A673 (cell line): ENCODE measurements at regions of chr17 and their contacts with region 1.

Region 1: GRCh38 chr17:40287494-40288369 is at the start of gene CDC6:
- DNase-seq: peak; percentile 98
- H3K4me3 ChIP-seq: peak within 1 kb of the TSS; percentile 85
- H3K27ac ChIP-seq: peak within 1 kb of the TSS; percentile 92
- H3K4me1 ChIP-seq: peaks cover 6% of the 10 kb centered on the region
- H3K27me3 ChIP-seq: no peaks in the 10 kb centered on the region
- CTCF ChIP-seq: no peak
- total RNA-seq, gene CDC6: 82.6 and 85.7 TPM in 2 replicates

Region 2: DNA sequence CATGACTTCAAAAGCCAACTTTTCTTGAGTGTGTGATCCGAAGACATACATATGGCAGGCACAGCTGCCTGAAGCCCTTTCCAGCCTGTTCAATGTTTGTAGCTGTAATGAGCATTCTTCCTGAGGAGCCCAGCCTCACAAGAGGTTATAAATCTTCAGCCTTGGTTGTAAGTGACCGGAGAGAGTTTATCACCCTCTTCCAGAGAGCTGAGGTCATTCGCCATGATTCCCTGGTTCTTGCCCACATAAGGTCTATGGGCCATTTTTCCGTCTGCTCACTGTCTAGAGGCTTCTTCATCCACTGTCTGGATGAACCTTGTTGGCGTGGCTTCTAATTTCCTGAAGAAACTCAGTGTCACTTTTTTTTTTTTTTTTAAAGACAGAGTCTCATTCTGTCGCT is 282.2 kb before region 1 on chr17:
- CTCF ChIA-PET with region 1: no interaction called
- POLR2A ChIA-PET with region 1: interaction called, 11 read pairs
- intact Hi-C with region 1: loop called (anchors 10 kb)
- DNase-seq: no peak
- H3K4me3 ChIP-seq: no peak overlapping the region
- H3K27ac ChIP-seq: no peak overlapping the region
- H3K4me1 ChIP-seq: no peaks in the 10 kb centered on the region
- H3K27me3 ChIP-seq: no peaks in the 10 kb centered on the region
- CTCF ChIP-seq: no peak

Region 3: DNA sequence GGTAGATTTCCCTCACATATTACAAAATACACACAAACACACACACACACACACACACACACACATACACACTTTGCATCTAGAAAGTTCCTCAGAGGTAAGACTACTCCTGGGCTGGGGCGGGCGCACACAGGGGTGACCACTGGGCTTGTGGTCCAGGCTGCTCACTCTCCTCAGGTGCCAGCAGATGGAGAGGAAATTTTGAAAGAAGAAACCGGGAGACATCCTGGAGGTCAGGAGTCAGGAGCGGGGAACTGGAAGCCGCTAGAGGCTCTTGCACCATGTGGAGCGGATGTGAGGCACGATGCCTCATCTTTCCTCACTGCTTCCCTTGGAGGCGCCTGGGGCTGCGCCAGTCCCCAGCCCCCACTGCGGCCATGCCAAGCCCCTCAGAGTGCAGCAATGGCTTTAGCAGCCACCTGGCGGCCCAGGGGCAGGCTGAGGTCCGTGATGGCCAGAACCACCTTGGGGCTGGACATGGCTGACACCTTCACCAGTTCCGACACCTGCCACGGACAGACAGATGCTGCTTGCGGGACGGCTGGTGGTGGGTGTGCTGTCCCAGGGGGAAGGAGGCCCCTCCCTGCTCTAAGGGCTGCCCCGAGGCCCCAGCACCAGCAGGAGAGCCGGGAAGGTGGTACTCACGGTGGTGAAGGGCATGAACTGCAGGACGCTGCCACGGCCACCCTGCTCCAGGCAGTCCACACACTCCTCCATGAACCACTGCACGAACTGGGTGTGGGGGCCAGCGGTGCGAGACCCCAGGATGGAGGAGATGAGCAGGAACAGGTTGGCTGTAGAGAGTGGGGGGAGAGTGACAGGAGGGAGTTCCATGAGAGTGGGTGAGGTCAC is 268.4 kb before region 1 on chr17:
- CTCF ChIA-PET with region 1: no interaction called
- POLR2A ChIA-PET with region 1: no interaction called
- intact Hi-C with region 1: loop called (anchors 10 kb)
- DNase-seq: no peak
- H3K4me3 ChIP-seq: no peak overlapping the region
- H3K27ac ChIP-seq: no peak overlapping the region
- H3K4me1 ChIP-seq: no peaks in the 10 kb centered on the region
- H3K27me3 ChIP-seq: no peaks in the 10 kb centered on the region
- CTCF ChIP-seq: no peak

Region 4: DNA sequence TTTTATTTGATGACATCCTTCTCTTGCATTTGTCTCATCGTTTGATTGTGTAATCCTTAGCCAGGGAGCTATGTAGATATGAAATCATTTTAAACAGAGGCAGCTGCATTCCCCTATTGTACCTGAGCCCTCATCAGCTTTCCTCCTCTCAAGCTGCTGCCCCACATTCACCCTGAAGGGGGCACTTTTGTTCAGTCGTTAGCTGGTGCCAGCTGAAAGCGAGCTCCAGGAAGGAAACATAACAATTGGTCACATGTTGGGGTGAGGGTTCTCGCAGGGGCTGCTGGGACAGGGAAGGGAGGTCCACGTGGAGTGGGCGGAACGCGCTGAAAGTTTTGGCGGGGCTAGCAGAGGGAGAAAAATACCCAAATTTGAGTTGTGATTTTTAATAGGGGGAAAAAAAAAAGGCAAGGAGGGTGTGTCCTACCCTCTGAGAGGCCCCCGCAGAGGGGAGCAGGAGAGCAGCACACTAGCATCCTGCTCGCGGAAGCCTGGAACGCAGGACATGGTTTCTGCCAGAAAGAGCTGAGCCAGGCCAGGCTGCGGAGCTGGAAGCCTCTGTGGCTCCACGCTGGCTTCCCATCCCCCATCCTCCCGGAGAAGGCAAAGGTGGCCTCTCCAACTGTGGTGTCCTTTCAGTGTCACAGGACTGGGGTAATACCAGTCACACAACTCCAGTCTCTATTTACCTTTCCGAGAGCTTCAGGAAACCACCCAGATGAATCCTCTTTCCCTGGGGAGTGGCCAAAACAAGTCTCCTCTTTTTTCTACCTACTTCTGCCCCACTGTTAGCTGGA is 174.4 kb before region 1 on chr17:
- CTCF ChIA-PET with region 1: no interaction called
- POLR2A ChIA-PET with region 1: no interaction called
- intact Hi-C with region 1: loop called (anchors 5 kb)
- DNase-seq: peak; percentile 93
- H3K4me3 ChIP-seq: peak overlapping the region; percentile 40
- H3K27ac ChIP-seq: peak overlapping the region; percentile 52
- H3K4me1 ChIP-seq: peaks cover 18% of the 10 kb centered on the region
- H3K27me3 ChIP-seq: no peaks in the 10 kb centered on the region
- CTCF ChIP-seq: peak; percentile 74; the same call in 1 of the 2 replicates

Region 5: DNA sequence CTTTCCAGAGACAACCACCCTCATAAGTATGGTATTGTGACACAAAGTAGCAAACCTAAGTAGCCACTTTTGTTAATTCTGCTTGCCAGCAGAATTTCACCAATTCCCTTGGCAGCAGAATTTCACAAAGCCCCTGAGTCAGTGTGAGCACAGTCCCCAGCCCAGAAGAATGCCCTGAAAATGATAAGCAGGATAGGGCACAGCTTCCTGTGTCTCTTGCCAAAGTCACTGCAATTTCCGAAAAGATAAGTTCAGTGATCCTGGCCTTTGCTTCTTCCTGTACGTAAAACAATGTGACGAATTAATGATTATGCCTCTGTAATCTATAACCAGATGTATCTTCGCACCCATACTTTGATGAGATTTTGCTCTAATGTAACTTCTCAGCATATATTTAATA is 84.6 kb before region 1 on chr17:
- CTCF ChIA-PET with region 1: interaction called, 4 read pairs
- POLR2A ChIA-PET with region 1: no interaction called
- intact Hi-C with region 1: loop called (anchors 5 kb)
- DNase-seq: no peak
- H3K4me3 ChIP-seq: no peak overlapping the region
- H3K27ac ChIP-seq: no peak overlapping the region
- H3K4me1 ChIP-seq: no peaks in the 10 kb centered on the region
- H3K27me3 ChIP-seq: no peaks in the 10 kb centered on the region
- CTCF ChIP-seq: no peak